Activated naive CD4-positive, alpha-beta T cell treated with anti-CD3 and anti-CD28 coated beads for 36 hours (primary cell): ENCODE measurements at regions of chr6 and their contacts with region 1.

Region 1: GRCh38 chr6:150068720-150069648 is at the start of gene ULBP3:
- DNase-seq: peak; percentile 83
- H3K4me3 Mint-ChIP-seq: peak within 1 kb of the TSS; percentile 72
- H3K27ac Mint-ChIP-seq: no peak within 1 kb of the TSS
- H3K4me1 Mint-ChIP-seq: peaks cover 4% of the 10 kb centered on the region
- H3K27me3 Mint-ChIP-seq: peaks cover 2% of the 10 kb centered on the region
- total RNA-seq, gene ULBP3: not detected

Region 2: DNA sequence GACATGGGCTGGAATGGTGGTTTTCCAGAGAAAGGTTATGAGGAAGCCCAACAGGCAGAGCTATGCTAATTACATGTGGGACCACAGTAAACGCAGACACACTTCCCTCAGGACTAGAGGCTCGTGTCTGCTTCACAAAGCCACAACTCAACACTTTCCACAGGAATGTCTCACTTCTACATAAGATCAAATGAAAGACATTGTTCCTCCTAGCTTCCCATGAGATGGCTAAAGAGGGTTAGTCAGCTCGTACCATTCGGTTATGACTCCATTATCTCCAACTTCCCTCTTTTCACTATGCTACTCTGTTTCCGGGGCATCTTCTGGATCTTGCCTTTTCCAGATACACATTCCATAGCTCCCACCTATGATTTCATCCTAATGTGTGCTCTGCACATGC is 555.1 kb before region 1 on chr6:
- CTCF ChIA-PET with region 1: no interaction called
- intact Hi-C with region 1: no loop called
- DNase-seq: no peak
- H3K4me3 Mint-ChIP-seq: no peak overlapping the region
- H3K27ac Mint-ChIP-seq: peak overlapping the region; percentile 4
- H3K4me1 Mint-ChIP-seq: peaks cover 50% of the 10 kb centered on the region
- H3K27me3 Mint-ChIP-seq: no peaks in the 10 kb centered on the region

Region 3: GRCh38 chr6:149934249-149935156 is 134.5 kb before region 1 on chr6:
- CTCF ChIA-PET with region 1: no interaction called
- intact Hi-C with region 1: loop called (anchors 1 kb)
- DNase-seq: peak; percentile 84
- H3K4me3 Mint-ChIP-seq: no peak overlapping the region
- H3K27ac Mint-ChIP-seq: no peak overlapping the region
- H3K4me1 Mint-ChIP-seq: peaks cover 17% of the 10 kb centered on the region
- H3K27me3 Mint-ChIP-seq: peaks cover 71% of the 10 kb centered on the region

Region 4: GRCh38 chr6:149941583-149942431 is 127.2 kb before region 1 on chr6 and contains the start of gene ULBP2:
- CTCF ChIA-PET with region 1: no interaction called
- intact Hi-C with region 1: loop called (anchors 1 kb)
- DNase-seq: peak; percentile 96
- H3K4me3 Mint-ChIP-seq: peak within 1 kb of the TSS; percentile 89
- H3K27ac Mint-ChIP-seq: no peak within 1 kb of the TSS
- H3K4me1 Mint-ChIP-seq: peaks cover 32% of the 10 kb centered on the region
- H3K27me3 Mint-ChIP-seq: peaks cover 46% of the 10 kb centered on the region
- total RNA-seq, gene ULBP2: 0.69 to 1.4 TPM

Region 5: GRCh38 chr6:150025201-150025917 is 43.6 kb before region 1 on chr6 and contains the start of gene RAET1L:
- CTCF ChIA-PET with region 1: no interaction called
- intact Hi-C with region 1: loop called (anchors 1 kb)
- DNase-seq: peak; percentile 78
- H3K4me3 Mint-ChIP-seq: no peak within 1 kb of the TSS
- H3K27ac Mint-ChIP-seq: peak within 1 kb of the TSS; percentile 61
- H3K4me1 Mint-ChIP-seq: peaks cover 16% of the 10 kb centered on the region
- H3K27me3 Mint-ChIP-seq: peaks cover 44% of the 10 kb centered on the region
- total RNA-seq, gene RAET1L: not detected

Region 6: DNA sequence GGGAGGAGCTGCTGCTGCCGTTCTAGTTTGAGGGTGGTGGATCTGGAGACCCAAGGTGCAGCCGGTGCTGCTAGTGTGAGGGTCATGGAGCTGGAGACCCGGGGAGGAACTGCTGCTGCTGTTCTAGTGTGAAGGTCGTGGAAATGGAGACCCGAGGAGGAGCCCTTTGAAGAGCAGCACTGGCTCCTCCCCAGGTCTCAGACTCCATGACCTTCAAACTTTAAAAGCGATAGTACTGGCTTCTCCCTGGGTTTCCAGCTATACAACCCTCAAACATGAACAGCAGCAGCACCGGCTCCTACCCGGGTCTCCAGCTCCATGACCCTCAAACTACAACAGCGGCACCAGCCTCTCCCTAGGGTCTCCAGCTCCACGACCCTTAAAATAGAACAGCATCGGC is 15.5 kb before region 1 on chr6:
- CTCF ChIA-PET with region 1: interaction called, 45 read pairs
- intact Hi-C with region 1: no loop called
- DNase-seq: no peak
- H3K4me3 Mint-ChIP-seq: no peak overlapping the region
- H3K27ac Mint-ChIP-seq: no peak overlapping the region
- H3K4me1 Mint-ChIP-seq: no peaks in the 10 kb centered on the region
- H3K27me3 Mint-ChIP-seq: peaks cover 54% of the 10 kb centered on the region

Region 7: GRCh38 chr6:150079604-150080003 is 10.6 kb after region 1 on chr6:
- CTCF ChIA-PET with region 1: interaction called, 15 read pairs
- intact Hi-C with region 1: no loop called
- DNase-seq: peak; percentile 35
- H3K4me3 Mint-ChIP-seq: no peak overlapping the region
- H3K27ac Mint-ChIP-seq: no peak overlapping the region
- H3K4me1 Mint-ChIP-seq: peaks cover 10% of the 10 kb centered on the region
- H3K27me3 Mint-ChIP-seq: peaks cover 2% of the 10 kb centered on the region

Region 8: DNA sequence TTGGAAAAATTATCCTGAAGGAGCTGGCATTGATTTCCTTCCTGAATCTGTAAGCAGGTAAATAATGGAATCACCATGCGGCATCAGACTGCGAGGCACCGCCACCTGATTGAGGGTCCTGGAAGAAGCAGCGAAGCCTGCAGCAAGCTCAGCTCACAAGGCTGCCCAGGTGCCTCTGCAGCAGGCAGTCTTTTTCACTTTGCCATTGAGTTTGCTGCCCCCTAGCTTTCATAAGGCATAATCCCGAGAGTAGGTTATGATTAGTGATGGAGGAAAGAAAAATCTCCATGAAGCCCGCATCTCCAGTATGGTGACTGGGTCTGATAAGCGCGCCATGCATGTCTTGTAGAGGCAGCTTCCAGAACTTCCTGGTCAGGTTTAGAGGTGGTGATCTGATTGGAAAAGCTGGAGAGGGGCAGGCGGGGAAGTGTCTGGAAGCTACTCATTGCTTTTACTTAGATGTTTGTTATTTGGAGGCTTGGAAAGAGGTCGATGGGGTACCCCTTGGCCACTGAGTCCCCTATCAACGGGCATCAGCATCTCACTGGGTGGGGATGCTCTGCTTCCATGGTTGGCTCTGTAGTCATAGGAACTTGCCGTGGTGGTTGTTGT is 326.5 kb after region 1 on chr6:
- CTCF ChIA-PET with region 1: interaction called, 10 read pairs
- intact Hi-C with region 1: no loop called
- DNase-seq: peak; percentile 59
- H3K4me3 Mint-ChIP-seq: no peak overlapping the region
- H3K27ac Mint-ChIP-seq: no peak overlapping the region
- H3K4me1 Mint-ChIP-seq: no peaks in the 10 kb centered on the region
- H3K27me3 Mint-ChIP-seq: peaks cover 8% of the 10 kb centered on the region